Stomach (tissue), 19 donors: ENCODE measurements at regions of chr1 and their contacts with region 1.

Region 1: GRCh38 chr1:147494998-147495580 is 46.2 kb upstream of the BCL9 start:
- DNase-seq: peak; percentile 70 to 91
- H3K4me3 ChIP-seq: no peak overlapping the region
- H3K27ac ChIP-seq: no peak overlapping the region
- H3K4me1 ChIP-seq: peaks cover 0 to 10% (median 4%) of the 10 kb centered on the region in 4 donors
- H3K27me3 ChIP-seq: peaks cover 0 to 3% (median 0%) of the 10 kb centered on the region in 3 donors
- CTCF ChIP-seq: peak in 5 of 7 experiments; percentile 64 to 84 (median 81)
- EP300 ChIP-seq: no peak
- POLR2A ChIP-seq: no peak

Region 2: DNA sequence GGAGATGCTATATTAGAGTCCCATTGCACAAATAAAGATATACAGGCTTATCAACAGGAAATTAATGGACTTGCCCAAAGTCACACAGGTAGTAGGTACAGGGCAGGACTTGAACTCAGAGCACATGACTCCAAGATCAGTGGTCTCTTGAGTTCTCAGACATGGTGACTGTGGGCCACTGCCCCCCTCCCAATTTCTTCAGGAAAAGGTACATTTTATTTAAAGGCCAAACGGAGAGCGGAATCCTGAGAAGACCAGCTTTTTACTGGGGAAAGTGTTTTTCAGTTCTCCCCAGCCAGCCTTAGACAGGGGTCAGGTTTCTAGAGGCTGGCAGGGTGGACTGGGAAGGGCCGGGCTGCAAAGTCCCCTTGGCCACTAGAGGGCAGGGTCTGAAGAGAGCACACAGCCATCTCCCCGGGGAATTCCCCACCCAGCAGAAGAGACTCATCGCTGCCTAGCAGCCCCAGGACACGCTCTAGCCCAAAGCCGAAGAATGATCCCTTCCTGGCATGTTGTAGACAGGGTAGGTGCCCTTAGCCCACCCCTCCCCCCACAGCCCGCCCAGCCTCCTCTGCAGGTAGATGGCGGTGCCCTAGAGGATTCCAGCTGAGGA is 145.6 kb after region 1 on chr1:
- intact Hi-C with region 1: loop called (anchors 10 kb)
- DNase-seq: peak; percentile 73 to 89
- H3K4me3 ChIP-seq: no peak overlapping the region
- H3K27ac ChIP-seq: no peak overlapping the region
- H3K4me1 ChIP-seq: peaks cover 0 to 16% (median 6%) of the 10 kb centered on the region in 4 donors
- H3K27me3 ChIP-seq: no peaks in the 10 kb centered on the region
- CTCF ChIP-seq: peak in 5 of 7 experiments; percentile 25 to 84 (median 73)
- EP300 ChIP-seq: no peak
- POLR2A ChIP-seq: no peak

Region 3: DNA sequence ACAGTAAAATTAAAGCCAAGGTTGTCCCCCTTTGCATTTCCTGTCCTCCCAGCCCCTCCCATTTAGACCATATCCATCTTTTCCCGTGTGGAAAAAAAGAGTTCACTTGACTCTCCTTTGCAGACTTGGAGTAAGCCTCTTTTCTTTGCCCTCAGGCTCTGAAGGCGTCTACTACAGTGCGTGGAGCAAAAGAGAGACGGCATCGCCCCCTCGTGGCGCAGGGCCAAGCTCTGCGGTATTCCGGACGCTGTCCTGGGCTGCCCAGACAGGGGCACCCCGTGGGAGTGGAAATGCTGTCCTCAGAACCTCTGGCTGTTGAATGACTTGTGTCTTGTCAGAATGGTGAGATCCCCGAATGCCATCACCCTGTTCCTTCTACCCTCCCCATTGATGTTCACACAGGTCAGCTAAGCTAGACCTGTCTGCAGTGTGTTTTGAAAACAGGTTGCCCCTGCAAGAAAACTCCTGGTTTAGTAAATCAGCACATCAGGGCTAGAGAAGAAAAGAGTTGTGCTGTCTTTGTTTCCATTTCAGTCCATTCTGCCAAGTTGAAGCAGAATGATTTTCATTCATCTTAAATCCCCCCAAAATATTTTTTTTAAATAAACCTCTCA is 395.2 kb after region 1 on chr1:
- intact Hi-C with region 1: loop called (anchors 10 kb)
- DNase-seq: peak; percentile 74 to 90
- H3K4me3 ChIP-seq: no peak overlapping the region
- H3K27ac ChIP-seq: no peak overlapping the region
- H3K4me1 ChIP-seq: peaks cover 0 to 6% (median 2%) of the 10 kb centered on the region in 4 donors
- H3K27me3 ChIP-seq: peaks cover 0 to 13% (median 0%) of the 10 kb centered on the region in 3 donors
- CTCF ChIP-seq: peak in 4 of 7 experiments; percentile 6 to 48 (median 25)
- EP300 ChIP-seq: no peak
- POLR2A ChIP-seq: no peak